ENCODE measurements at regions of chr10 and their contacts with region 1.

Region 1: GRCh38 chr10:17365402-17365801 is 89.0 kb downstream of the ST8SIA6 start:
- DNase-seq: no peak
- H3K4me3 Mint-ChIP-seq: no peak overlapping the region
- H3K27ac Mint-ChIP-seq: no peak overlapping the region
- H3K4me1 Mint-ChIP-seq: no peaks in the 10 kb centered on the region
- H3K27me3 Mint-ChIP-seq: peaks cover 9% of the 10 kb centered on the region

Region 2: DNA sequence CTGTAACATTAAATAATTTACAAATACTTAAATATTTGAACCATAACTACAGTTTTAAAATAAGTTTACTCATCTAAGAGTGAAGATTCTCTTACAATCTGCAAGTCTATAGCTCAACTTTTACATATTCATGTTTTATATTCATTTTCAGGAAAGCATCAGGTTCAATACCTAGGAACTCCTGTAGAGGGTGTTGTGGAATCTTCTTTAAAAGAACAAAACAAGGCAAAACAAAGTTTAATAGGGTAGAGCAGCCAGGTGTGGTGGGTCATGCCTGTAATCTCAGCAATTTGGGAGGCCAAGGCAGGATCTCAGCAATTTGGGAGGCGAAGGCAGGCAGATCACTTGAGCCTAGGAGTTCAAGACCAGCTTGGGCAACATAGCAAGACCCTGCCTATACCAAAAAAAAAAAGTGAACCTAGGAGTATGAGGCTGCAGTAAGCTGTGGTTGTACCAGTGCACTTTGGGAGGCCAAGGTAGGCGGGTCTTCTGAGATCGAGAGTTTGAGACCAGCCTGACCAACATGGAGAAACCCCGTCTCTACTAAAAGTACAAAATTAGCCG is 43.9 kb after region 1 on chr10:
- intact Hi-C with region 1: loop called (anchors 1 kb)
- DNase-seq: no peak
- H3K4me3 Mint-ChIP-seq: no peak overlapping the region
- H3K27ac Mint-ChIP-seq: no peak overlapping the region
- H3K4me1 Mint-ChIP-seq: peaks cover 14% of the 10 kb centered on the region
- H3K27me3 Mint-ChIP-seq: peaks cover 6% of the 10 kb centered on the region